Prostate gland (tissue), 2 donors: ENCODE measurements at regions of chr10 and their contacts with region 1.

Region 1: DNA sequence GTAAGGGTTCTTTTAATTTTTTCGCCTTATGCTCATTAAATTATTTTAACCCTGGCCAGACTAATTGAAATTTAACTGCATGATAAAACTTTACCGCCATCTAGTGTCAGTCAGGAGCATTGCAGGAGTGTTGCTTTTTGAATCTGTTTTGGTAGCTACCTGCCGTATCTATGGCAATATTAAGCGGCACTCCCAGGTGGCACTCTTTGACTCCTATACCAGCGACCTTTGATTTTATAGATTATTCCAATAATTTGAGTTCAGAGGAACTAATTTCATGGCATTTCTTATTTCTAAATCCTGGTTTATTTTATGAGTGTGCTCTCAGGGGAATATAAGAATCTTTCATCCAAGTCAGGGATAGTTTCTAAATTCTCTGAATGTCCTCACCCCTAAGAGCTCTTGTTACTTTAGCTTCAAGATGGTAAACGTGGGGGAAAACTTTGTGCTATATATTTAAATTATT is 198.9 kb downstream of the REEP3 start:
- DNase-seq: peak; percentile 60
- H3K4me3 ChIP-seq: no peak overlapping the region
- H3K27ac ChIP-seq: peak overlapping the region in 1 of 2 donors; percentile 26
- H3K4me1 ChIP-seq: no peaks in the 10 kb centered on the region
- H3K27me3 ChIP-seq: no peaks in the 10 kb centered on the region
- CTCF ChIP-seq: peak; percentile 82 to 96 (median 92)
- POLR2A ChIP-seq: no peak

Region 2: DNA sequence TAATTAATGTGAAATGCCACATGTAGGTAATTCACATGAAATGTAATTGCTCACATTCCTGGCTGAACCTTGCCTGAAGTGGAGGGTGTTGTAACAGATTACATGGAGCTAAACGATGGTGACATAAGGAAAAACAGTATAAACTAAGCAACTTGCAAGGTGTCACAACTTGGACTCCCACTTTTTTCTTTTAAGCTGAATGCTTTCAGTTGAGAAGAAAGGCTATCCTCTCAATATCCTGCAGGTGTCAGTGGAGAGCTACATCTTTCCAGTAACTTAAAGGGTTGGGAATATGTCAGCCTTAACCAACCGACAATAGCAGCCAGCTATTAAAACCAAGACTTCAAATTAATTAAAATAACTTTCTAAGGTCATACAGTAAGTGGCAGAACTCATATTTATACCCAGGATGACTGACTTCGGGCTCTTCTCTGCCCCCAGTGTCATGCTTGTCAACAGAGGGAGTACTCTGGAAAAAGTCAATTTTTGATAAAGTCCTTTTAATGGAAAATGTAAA is 553.3 kb before region 1 on chr10:
- intact Hi-C with region 1: loop called (anchors 5 kb)
- DNase-seq: peak; percentile 10
- H3K4me3 ChIP-seq: no peak overlapping the region
- H3K27ac ChIP-seq: no peak overlapping the region
- H3K4me1 ChIP-seq: peaks cover 6% of the 10 kb centered on the region
- H3K27me3 ChIP-seq: no peaks in the 10 kb centered on the region
- CTCF ChIP-seq: peak; percentile 57 to 85 (median 76)
- POLR2A ChIP-seq: no peak

Region 3: DNA sequence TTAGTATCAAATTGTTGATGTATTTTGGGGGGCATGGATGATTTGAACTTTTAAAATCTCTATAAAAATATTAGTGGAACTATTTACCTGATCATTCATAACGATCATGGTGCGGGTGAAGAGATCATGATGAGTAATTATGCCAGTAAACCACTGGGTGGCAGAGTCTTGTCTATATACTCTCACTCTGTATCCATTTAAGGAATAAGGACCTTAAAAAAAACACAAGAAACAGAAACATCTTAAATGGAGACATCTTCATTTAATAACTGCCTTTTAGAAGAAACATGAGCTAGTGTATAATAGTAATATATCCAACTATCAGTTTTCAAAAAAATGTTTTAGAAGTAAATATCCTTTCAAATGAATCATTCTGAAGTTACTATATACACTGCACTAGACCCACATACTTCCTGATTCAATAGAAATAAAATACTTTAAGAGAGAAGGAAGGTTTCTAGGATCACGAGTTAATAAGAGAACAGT is 502.9 kb before region 1 on chr10:
- intact Hi-C with region 1: loop called (anchors 5 kb)
- DNase-seq: peak; percentile 44
- H3K4me3 ChIP-seq: no peak overlapping the region
- H3K27ac ChIP-seq: no peak overlapping the region
- H3K4me1 ChIP-seq: no peaks in the 10 kb centered on the region
- H3K27me3 ChIP-seq: no peaks in the 10 kb centered on the region
- CTCF ChIP-seq: peak in 3 of 4 experiments; percentile 68 to 80 (median 77)
- POLR2A ChIP-seq: no peak

Region 4: DNA sequence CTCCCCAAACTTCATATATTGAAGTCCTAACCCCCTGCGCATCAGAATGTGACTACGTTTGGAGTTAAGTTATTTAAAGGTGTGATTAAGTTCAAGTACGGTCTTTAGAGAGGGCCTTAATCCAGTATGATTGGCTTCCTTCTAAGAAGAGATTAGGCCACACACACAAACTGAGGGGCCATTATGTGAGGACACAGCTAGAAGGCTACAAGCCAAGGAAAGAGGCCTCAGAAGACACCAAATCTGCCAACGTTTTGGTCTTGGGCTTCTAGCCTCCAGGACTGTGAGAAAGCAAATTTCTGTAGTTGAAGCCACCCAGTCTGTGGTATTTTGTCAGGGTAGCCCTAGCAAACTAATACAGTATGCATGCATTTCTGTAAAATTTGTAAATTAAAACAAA is 157.2 kb before region 1 on chr10:
- intact Hi-C with region 1: no loop called
- DNase-seq: no peak
- H3K4me3 ChIP-seq: no peak overlapping the region
- H3K27ac ChIP-seq: no peak overlapping the region
- H3K4me1 ChIP-seq: no peaks in the 10 kb centered on the region
- H3K27me3 ChIP-seq: no peaks in the 10 kb centered on the region
- CTCF ChIP-seq: no peak
- POLR2A ChIP-seq: no peak

Region 5: DNA sequence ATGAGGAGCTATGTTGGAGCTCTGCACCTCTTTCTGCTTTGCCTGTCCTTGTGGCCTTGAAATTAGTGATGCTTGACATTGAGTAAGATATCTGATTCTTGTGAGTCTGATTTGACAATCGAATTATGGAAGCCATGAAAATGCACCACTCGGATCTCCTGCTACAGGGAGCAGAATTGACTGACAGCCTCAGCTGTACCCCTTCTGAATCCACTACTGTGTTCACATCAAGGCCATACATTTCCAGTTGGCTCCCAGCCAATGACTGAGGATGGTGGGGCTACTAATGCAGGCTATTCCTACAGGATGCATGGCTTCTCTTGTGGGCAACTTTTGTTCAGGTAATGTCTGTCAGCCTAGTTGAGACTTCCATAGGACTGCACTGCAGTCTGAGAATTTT is 123.0 kb after region 1 on chr10:
- intact Hi-C with region 1: no loop called
- DNase-seq: no peak
- H3K4me3 ChIP-seq: no peak overlapping the region
- H3K27ac ChIP-seq: no peak overlapping the region
- H3K4me1 ChIP-seq: no peaks in the 10 kb centered on the region
- H3K27me3 ChIP-seq: no peaks in the 10 kb centered on the region
- CTCF ChIP-seq: no peak
- POLR2A ChIP-seq: no peak

Region 6: GRCh38 chr10:64071218-64071617 is 351.1 kb after region 1 on chr10:
- intact Hi-C with region 1: no loop called
- DNase-seq: no peak
- H3K4me3 ChIP-seq: no peak overlapping the region
- H3K27ac ChIP-seq: no peak overlapping the region
- H3K4me1 ChIP-seq: no peaks in the 10 kb centered on the region
- H3K27me3 ChIP-seq: no peaks in the 10 kb centered on the region
- CTCF ChIP-seq: no peak
- POLR2A ChIP-seq: no peak